Body of pancreas (tissue), 4 donors: ENCODE measurements at regions of chr2 and their contacts with region 1.

Region 1: GRCh38 chr2:72993147-72993932 is 76.0 kb downstream of the EMX1 start:
- DNase-seq: peak; percentile 22 to 37 (median 26)
- ATAC-seq: peak; percentile 15
- H3K4me3 ChIP-seq: no peak overlapping the region
- H3K27ac ChIP-seq: no peak overlapping the region
- H3K4me1 ChIP-seq: no peaks in the 10 kb centered on the region
- H3K27me3 ChIP-seq: no peaks in the 10 kb centered on the region
- CTCF ChIP-seq: peak; percentile 58 to 80 (median 69)
- POLR2A ChIP-seq: no peak

Region 2: GRCh38 chr2:72731116-72731515 is 262.2 kb before region 1 on chr2:
- intact Hi-C with region 1: no loop called
- DNase-seq: no peak
- ATAC-seq: no peak
- H3K4me3 ChIP-seq: no peak overlapping the region
- H3K27ac ChIP-seq: no peak overlapping the region
- H3K4me1 ChIP-seq: no peaks in the 10 kb centered on the region
- H3K27me3 ChIP-seq: no peaks in the 10 kb centered on the region
- CTCF ChIP-seq: no peak
- POLR2A ChIP-seq: no peak

Region 3: GRCh38 chr2:73163483-73164367 is 170.4 kb after region 1 on chr2:
- intact Hi-C with region 1: loop called (anchors 5 kb)
- DNase-seq: peak; percentile 70 to 78 (median 74)
- ATAC-seq: peak; percentile 88
- H3K4me3 ChIP-seq: no peak overlapping the region
- H3K27ac ChIP-seq: no peak overlapping the region
- H3K4me1 ChIP-seq: no peaks in the 10 kb centered on the region
- H3K27me3 ChIP-seq: no peaks in the 10 kb centered on the region
- CTCF ChIP-seq: peak; percentile 73 to 89 (median 81)
- POLR2A ChIP-seq: no peak

Region 4: GRCh38 chr2:73176881-73177644 is 183.7 kb after region 1 on chr2:
- intact Hi-C with region 1: loop called (anchors 5 kb)
- DNase-seq: peak; percentile 89 to 93 (median 90)
- ATAC-seq: peak; percentile 90
- H3K4me3 ChIP-seq: peak overlapping the region in 1 of 2 donors; percentile 3
- H3K27ac ChIP-seq: peak overlapping the region in 3 of 4 donors; percentile 7 to 38 (median 9)
- H3K4me1 ChIP-seq: peaks cover 27% of the 10 kb centered on the region
- H3K27me3 ChIP-seq: peaks cover 0 to 14% of the 10 kb centered on the region in 2 donors
- CTCF ChIP-seq: peak; percentile 94 to 99 (median 99)
- POLR2A ChIP-seq: peak in 2 of 3 donors; percentile 31 to 37